MCF 10A (cell line): ENCODE measurements at regions of chr1 and their contacts with region 1.

Region 1: DNA sequence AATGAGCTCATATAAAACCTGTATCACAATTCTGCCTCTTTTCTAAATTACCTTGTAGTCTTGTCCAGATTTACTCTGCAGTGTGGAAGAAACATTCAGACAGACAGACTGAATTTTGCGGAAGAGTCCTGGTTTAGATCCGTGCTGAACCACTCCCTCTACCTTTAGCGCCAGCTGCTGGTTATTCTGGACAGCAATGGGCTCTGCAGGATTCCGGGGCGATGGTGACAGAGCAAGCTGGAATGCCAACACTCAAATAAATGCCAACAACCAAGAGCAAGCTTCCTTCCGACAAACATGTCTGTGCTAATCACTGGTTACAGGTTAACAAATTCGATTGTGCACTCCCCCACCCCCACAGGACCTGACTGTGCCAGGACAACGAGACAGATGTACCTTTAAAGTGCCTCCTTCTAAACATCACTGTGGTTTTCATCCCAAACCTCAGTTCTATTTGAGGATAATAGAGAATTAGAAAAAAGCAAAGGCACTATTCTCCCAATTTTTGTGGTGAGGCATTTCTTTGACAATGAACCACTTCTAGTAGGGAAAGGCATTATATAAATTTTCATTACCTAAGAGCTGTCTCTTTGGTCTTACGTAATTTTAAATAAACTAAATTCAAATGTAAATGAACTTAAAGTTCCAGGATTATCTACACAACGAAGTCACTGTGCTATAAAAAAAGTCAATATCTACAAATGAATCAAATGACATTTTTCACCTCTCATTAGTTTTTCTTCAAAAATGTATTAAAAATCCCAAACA is 90.4 kb downstream of the INTS7 start:
- DNase-seq: peak; percentile 96
- H3K4me3 Mint-ChIP-seq: peak overlapping the region; percentile 3
- H3K27ac Mint-ChIP-seq: peak overlapping the region; percentile 21
- H3K4me1 Mint-ChIP-seq: peaks cover 14% of the 10 kb centered on the region
- H3K27me3 Mint-ChIP-seq: no peaks in the 10 kb centered on the region
- CTCF ChIP-seq: peak; percentile 96

Region 2: DNA sequence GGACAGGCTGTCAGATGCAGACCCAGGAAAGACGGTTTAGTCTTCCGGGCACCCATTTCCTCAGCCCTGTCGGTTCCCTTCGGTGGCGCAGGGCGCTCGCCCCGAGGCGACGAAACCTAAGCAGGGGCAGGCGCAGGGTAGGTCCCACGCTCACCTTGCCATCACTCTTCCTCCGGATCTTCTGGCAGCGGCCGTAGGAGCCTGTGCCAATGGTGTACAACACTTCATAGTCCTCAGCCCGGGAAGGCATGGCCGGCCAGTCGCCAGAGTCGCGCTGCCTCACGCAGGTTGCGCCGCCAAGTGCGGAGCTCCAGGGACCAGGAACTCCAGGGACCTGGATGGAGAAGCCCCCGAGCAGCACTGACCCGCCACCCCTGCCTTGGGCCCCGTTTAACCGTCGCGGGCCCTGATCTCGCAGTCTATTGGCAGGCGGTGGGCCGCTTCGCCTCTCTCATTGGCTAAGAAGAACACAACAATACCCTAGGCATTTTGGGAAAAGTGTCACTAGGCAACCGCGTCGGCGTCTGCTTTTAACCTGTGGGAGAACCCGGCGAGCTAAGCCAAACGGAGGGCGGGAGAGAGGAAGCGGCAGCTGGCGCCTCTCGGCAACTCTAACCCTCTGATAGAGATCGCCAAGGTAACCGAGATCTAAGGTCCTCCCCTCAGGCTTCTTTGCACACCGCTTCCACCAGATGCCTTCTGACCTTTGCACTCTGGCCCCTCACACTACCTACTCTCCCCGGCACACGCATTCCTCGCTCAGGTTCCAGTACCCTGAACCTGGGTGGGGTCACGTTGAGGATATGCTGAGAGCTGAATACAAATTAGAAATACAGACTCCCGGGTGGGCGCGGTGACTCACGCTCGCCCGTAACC is 269.4 kb before region 1 on chr1 and contains the start of gene NEK2:
- CTCF ChIA-PET with region 1: interaction called, 151 read pairs
- POLR2A ChIA-PET with region 1: interaction called, 12 read pairs
- intact Hi-C with region 1: loop called (anchors 1 kb)
- DNase-seq: peak; percentile 100
- H3K4me3 Mint-ChIP-seq: peak within 1 kb of the TSS; percentile 92
- H3K27ac Mint-ChIP-seq: peak within 1 kb of the TSS; percentile 91
- H3K4me1 Mint-ChIP-seq: peaks cover 26% of the 10 kb centered on the region
- H3K27me3 Mint-ChIP-seq: no peaks in the 10 kb centered on the region
- CTCF ChIP-seq: no peak
- total RNA-seq, gene NEK2: 33.4 and 44.5 TPM in 2 replicates

Region 3: DNA sequence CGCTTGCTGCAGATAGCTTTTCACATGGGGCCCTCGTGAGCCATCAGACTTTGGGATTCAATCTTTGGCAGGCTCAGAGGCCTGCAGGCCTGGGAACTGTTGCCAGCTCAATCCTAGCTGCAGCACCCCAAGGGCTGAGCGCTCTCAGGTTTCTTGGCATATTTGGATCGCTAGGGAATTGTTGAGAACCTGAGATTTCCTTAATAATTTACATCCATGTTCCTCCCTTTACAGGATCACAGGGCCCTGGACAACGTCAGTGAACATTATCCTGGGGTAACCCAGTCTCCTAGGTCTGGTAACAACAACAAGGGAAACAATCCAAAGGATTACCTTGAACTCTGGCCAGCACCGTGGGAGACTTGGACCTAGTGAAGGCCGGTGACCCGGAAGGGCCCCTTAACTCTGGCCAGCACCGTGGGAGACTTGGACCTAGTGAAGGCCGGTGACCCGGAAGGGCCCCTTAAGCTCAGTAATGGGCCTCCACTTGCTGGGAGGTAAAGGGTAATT is 220.2 kb before region 1 on chr1:
- CTCF ChIA-PET with region 1: interaction called, 10 read pairs
- POLR2A ChIA-PET with region 1: no interaction called
- intact Hi-C with region 1: no loop called
- DNase-seq: no peak
- H3K4me3 Mint-ChIP-seq: no peak overlapping the region
- H3K27ac Mint-ChIP-seq: no peak overlapping the region
- H3K4me1 Mint-ChIP-seq: no peaks in the 10 kb centered on the region
- H3K27me3 Mint-ChIP-seq: no peaks in the 10 kb centered on the region
- CTCF ChIP-seq: no peak

Region 4: DNA sequence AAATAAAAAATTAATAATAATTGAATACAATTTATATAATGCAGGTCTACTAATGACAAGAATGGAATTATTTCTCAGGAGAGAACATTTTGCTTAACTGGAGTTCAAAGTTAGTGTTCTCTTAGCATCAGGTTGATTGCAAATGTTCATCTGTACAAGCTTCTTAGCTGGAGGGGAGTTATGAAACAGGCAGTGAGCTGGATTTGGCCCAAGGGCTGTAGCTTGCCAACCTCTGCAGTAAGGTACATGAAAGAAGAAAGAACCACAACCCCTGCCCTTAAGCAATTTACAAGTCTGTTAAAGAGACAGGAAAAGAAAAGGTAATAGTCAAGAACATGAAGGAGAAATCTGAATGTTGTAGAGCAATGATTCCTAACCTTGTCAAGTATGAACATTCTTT is 131.3 kb before region 1 on chr1:
- CTCF ChIA-PET with region 1: interaction called, 17 read pairs
- POLR2A ChIA-PET with region 1: interaction called, 10 read pairs
- intact Hi-C with region 1: no loop called
- DNase-seq: peak; percentile 93
- H3K4me3 Mint-ChIP-seq: no peak overlapping the region
- H3K27ac Mint-ChIP-seq: no peak overlapping the region
- H3K4me1 Mint-ChIP-seq: peaks cover 7% of the 10 kb centered on the region
- H3K27me3 Mint-ChIP-seq: no peaks in the 10 kb centered on the region
- CTCF ChIP-seq: no peak

Region 5: GRCh38 chr1:211859405-211859804 is 85.5 kb before region 1 on chr1:
- CTCF ChIA-PET with region 1: no interaction called
- POLR2A ChIA-PET with region 1: no interaction called
- intact Hi-C with region 1: no loop called
- DNase-seq: no peak
- H3K4me3 Mint-ChIP-seq: no peak overlapping the region
- H3K27ac Mint-ChIP-seq: no peak overlapping the region
- H3K4me1 Mint-ChIP-seq: no peaks in the 10 kb centered on the region
- H3K27me3 Mint-ChIP-seq: no peaks in the 10 kb centered on the region
- CTCF ChIP-seq: no peak

Region 6: GRCh38 chr1:211892577-211892976 is 52.3 kb before region 1 on chr1:
- CTCF ChIA-PET with region 1: interaction called, 14 read pairs
- POLR2A ChIA-PET with region 1: interaction called, 5 read pairs
- intact Hi-C with region 1: no loop called
- DNase-seq: no peak
- H3K4me3 Mint-ChIP-seq: no peak overlapping the region
- H3K27ac Mint-ChIP-seq: no peak overlapping the region
- H3K4me1 Mint-ChIP-seq: peaks cover 7% of the 10 kb centered on the region
- H3K27me3 Mint-ChIP-seq: no peaks in the 10 kb centered on the region
- CTCF ChIP-seq: no peak

Region 7: GRCh38 chr1:211928993-211929637 is 15.8 kb before region 1 on chr1:
- CTCF ChIA-PET with region 1: interaction called, 127 read pairs
- POLR2A ChIA-PET with region 1: interaction called, 54 read pairs
- intact Hi-C with region 1: no loop called
- DNase-seq: peak; percentile 96
- H3K4me3 Mint-ChIP-seq: peak overlapping the region; percentile 62
- H3K27ac Mint-ChIP-seq: peak overlapping the region; percentile 95
- H3K4me1 Mint-ChIP-seq: peaks cover 21% of the 10 kb centered on the region
- H3K27me3 Mint-ChIP-seq: no peaks in the 10 kb centered on the region
- CTCF ChIP-seq: no peak